Gastrocnemius medialis (tissue), 4 donors: ENCODE measurements at regions of chr5 and their contacts with region 1.

Region 1: DNA sequence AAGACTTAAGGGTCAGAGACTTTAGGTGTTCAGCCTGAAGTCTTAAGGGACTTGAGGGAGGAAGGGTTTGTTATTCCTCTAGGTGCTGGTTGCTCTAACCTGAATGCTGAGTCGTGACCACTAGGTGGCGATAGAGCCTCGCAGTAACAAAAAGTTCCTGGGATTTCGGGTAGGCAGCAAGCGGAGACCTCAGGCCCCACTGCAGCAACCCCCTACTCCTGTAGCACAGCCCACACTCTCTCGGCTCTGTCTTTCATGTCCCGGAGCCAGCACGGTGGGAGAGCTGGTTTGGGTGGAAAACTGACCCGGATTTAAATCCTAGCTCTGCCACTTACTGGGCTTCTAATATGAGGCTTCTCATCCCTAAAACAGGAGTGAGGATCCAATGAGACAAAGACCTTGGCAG is 100.3 kb upstream of the PANK3 start:
- DNase-seq: peak; percentile 36 to 38
- ATAC-seq: peak; percentile 59 to 68
- H3K4me3 ChIP-seq: no peak overlapping the region
- H3K27ac ChIP-seq: no peak overlapping the region
- H3K4me1 ChIP-seq: peaks cover 0 to 7% of the 10 kb centered on the region in 2 donors
- H3K27me3 ChIP-seq: no peaks in the 10 kb centered on the region
- CTCF ChIP-seq: peak; percentile 58 to 89 (median 76)
- POLR2A ChIP-seq: no peak

Region 2: DNA sequence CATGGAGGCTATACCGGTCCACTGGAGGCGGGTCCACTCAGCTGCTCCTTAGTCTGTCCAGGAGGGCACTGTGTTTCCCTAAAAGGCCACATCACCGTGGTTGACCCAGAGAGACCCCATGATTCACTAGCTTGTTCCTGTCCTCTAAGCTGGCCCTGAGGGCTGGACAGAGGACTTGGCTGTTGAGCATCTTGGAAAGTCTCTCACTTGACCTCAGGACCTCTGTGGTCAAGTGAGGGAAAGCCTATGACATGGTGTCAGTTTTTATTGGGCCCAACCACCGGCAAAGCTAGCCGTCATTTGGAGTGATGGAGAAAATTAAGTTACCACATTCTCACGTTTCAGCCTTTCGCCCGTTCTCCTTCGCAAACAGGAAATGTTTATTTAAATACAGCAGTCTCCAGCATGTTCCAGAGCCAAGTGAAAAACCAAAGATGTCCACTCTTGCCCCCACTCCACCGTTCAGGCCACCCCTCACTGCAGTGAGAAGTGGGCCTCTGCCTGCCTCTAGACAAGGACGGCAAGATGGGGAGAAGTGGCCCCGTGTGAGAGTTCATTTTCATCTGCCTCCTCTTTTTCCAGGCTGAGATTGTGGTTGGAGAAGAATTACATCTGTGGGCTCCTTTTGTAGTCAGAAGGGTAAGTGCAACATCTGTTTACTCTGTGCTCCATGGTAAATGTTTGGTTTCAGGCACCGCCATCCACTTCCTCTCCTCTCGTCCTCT is 617.1 kb after region 1 on chr5:
- in situ Hi-C with region 1: loop called in 3 of 4 experiments (anchors 25 kb)
- intact Hi-C with region 1: no loop called
- DNase-seq: peak; percentile 3 to 62
- ATAC-seq: peak; percentile 31 to 74
- H3K4me3 ChIP-seq: no peak overlapping the region
- H3K27ac ChIP-seq: peak overlapping the region; percentile 2 to 58 (median 40)
- H3K4me1 ChIP-seq: peaks cover 0 to 6% of the 10 kb centered on the region in 2 donors
- H3K27me3 ChIP-seq: peaks cover 0 to 4% (median 0%) of the 10 kb centered on the region in 3 donors
- CTCF ChIP-seq: no peak
- POLR2A ChIP-seq: no peak

Region 3: GRCh38 chr5:169302491-169303118 is 623.1 kb after region 1 on chr5:
- in situ Hi-C with region 1: loop called in 3 of 4 experiments (anchors 25 kb)
- intact Hi-C with region 1: no loop called
- DNase-seq: peak; percentile 25 to 47
- ATAC-seq: peak in 1 of 2 donors; percentile 42
- H3K4me3 ChIP-seq: no peak overlapping the region
- H3K27ac ChIP-seq: no peak overlapping the region
- H3K4me1 ChIP-seq: peaks cover 0 to 6% of the 10 kb centered on the region in 2 donors
- H3K27me3 ChIP-seq: peaks cover 0 to 14% (median 4%) of the 10 kb centered on the region in 3 donors
- CTCF ChIP-seq: peak; percentile 53 to 85 (median 61)
- POLR2A ChIP-seq: no peak

Region 4: GRCh38 chr5:169567079-169567478 is 887.6 kb after region 1 on chr5:
- in situ Hi-C with region 1: loop called in 1 of 4 experiments (anchors 25 kb)
- intact Hi-C with region 1: no loop called
- DNase-seq: no peak
- ATAC-seq: no peak
- H3K4me3 ChIP-seq: no peak overlapping the region
- H3K27ac ChIP-seq: no peak overlapping the region
- H3K4me1 ChIP-seq: no peaks in the 10 kb centered on the region
- H3K27me3 ChIP-seq: peaks cover 0 to 4% (median 0%) of the 10 kb centered on the region in 3 donors
- CTCF ChIP-seq: no peak
- POLR2A ChIP-seq: no peak

Region 5: DNA sequence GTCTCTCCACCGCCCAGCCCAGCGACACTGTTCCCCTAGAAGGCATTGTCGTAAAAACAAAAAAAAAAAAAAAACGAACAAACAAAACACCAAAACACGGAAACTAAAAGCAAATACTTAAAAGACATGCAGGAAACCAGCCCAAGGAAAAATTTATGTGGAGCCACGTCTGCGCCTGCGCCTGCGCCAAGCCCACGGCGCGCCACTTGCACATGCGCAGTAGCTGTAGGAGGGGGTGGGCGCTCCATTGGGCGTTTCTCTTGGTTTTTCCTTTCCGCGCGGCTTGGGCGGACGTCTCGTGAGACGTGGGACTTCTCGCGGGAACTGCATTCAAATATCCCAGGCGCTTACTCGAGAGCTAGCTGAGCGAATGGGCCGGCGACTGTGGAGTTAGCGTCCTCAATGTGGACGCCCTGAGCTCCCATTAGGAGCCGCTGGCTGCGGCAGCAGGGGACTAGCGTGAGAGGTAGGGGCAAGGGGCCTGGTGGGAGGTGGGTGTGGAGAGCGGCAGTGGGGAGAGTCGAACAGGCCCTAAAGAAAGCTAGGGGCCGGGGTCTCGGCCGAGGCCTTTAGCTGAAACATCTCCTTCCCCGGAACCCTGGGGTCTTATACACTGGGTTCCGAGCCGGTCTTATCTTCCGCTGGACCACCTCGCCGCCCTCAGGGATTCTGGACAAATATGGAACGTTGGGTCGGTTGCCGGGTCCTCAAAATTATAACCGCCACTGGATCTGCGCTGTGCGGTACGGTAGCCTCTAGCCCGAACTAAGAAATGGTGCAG is 904.1 kb after region 1 on chr5 and contains the start of gene SPDL1:
- in situ Hi-C with region 1: loop called in 1 of 4 experiments (anchors 10 kb)
- intact Hi-C with region 1: loop called (anchors 2 kb)
- DNase-seq: peak; percentile 86 to 91
- ATAC-seq: peak; percentile 95 to 98
- H3K4me3 ChIP-seq: peak within 1 kb of the TSS; percentile 63 to 98 (median 91)
- H3K27ac ChIP-seq: peak within 1 kb of the TSS; percentile 70 to 82 (median 78)
- H3K4me1 ChIP-seq: peaks cover 0 to 4% of the 10 kb centered on the region in 2 donors
- H3K27me3 ChIP-seq: no peaks in the 10 kb centered on the region
- CTCF ChIP-seq: no peak
- POLR2A ChIP-seq: peak in 1 of 2 donors; percentile 61
- total RNA-seq, gene SPDL1: 0.78 to 4.6 (median 3.2) TPM